ENCODE measurements at regions of chr13 and their contacts with region 1.

Region 1: GRCh38 chr13:32427852-32428580 is at the start of gene N4BP2L1:
- DNase-seq: peak; percentile 95
- H3K4me3 Mint-ChIP-seq: peak within 1 kb of the TSS; percentile 94
- H3K27ac Mint-ChIP-seq: peak within 1 kb of the TSS; percentile 97
- H3K4me1 Mint-ChIP-seq: peaks cover 31% of the 10 kb centered on the region
- H3K27me3 Mint-ChIP-seq: no peaks in the 10 kb centered on the region
- total RNA-seq, gene N4BP2L1: 22.6 TPM

Region 2: DNA sequence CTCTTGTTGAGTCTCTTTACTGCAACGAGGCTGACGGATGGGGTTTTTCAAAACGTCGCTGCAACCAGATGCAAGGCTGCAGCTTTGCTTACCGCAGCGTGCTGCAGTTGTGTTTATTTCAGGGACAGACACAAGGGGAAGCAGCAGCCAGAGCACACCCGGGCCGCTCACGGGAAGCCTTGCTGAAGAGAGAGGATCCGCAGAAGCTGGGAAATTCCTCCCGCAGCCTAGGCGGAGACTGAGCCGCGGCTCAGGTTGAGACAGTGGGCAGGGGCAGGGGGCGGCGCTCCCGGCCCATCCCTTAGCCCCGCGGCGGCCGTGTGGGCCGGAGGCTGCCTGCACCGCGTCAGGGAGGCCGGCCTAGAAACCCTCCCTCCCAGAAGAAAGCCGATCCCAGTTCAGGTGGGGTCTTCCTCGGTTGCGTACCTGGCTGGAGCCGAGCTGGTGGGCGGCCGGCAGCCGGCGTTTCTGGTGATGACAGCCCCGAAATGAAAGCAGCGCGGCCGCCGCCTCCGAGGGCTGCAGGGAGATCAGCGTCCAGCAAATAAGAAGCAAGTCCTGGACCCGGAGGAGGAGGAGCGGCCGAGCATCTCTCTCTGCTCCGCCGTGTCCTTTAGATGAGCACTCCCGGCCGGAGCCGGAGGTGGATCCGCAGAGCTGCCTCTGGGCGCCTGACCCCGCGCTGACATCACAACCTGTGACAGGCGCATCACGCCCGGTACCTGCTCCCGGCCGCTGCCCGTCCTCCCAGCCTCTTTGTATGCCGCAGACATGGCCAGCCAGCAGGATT is 396.8 kb before region 1 on chr13 and contains the start of gene FRY:
- CTCF ChIA-PET with region 1: no interaction called
- intact Hi-C with region 1: loop called (anchors 5 kb)
- DNase-seq: peak; percentile 72
- H3K4me3 Mint-ChIP-seq: peak within 1 kb of the TSS; percentile 85
- H3K27ac Mint-ChIP-seq: peak within 1 kb of the TSS; percentile 68
- H3K4me1 Mint-ChIP-seq: peaks cover 45% of the 10 kb centered on the region
- H3K27me3 Mint-ChIP-seq: peaks cover 9% of the 10 kb centered on the region
- total RNA-seq, gene FRY: 7.3 to 7.8 TPM

Region 3: GRCh38 chr13:32315238-32316027 is 112.6 kb before region 1 on chr13 and contains the starts of genes BRCA2 and ZAR1L:
- CTCF ChIA-PET with region 1: no interaction called
- intact Hi-C with region 1: loop called (anchors 1 kb)
- DNase-seq: peak; percentile 91
- H3K4me3 Mint-ChIP-seq: peak within 1 kb of the TSS; percentile 92
- H3K27ac Mint-ChIP-seq: peak within 1 kb of the TSS; percentile 98
- H3K4me1 Mint-ChIP-seq: peaks cover 12% of the 10 kb centered on the region
- H3K27me3 Mint-ChIP-seq: no peaks in the 10 kb centered on the region
- total RNA-seq, gene BRCA2: 17.3 to 21.3 TPM
- total RNA-seq, gene ZAR1L: not detected

Region 4: DNA sequence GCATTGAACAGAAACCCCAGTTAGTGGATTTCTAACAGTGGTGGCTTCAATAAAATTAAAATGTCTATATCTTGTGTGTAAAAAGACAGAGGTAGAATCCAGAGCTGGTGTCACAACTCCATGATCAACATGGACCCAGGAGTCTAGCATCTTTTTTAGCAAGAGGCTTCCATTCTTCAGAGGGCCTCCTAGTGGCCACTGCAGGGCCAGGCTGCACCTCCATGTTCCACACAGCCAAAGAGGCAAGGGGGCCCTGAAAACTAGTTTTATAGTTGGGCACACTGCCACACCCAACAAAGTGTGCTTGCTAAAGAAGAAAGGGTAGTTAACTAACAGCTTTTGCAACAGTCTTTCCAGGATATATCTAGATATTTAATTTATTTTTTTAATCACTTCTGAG is 13.0 kb before region 1 on chr13:
- CTCF ChIA-PET with region 1: no interaction called
- intact Hi-C with region 1: no loop called
- DNase-seq: peak; percentile 48
- H3K4me3 Mint-ChIP-seq: no peak overlapping the region
- H3K27ac Mint-ChIP-seq: no peak overlapping the region
- H3K4me1 Mint-ChIP-seq: peaks cover 10% of the 10 kb centered on the region
- H3K27me3 Mint-ChIP-seq: no peaks in the 10 kb centered on the region

Region 5: GRCh38 chr13:32650705-32651311 is 222.8 kb after region 1 on chr13:
- CTCF ChIA-PET with region 1: no interaction called
- intact Hi-C with region 1: loop called (anchors 5 kb)
- DNase-seq: peak; percentile 79
- H3K4me3 Mint-ChIP-seq: no peak overlapping the region
- H3K27ac Mint-ChIP-seq: peak overlapping the region; percentile 12
- H3K4me1 Mint-ChIP-seq: peaks cover 39% of the 10 kb centered on the region
- H3K27me3 Mint-ChIP-seq: no peaks in the 10 kb centered on the region

Region 6: GRCh38 chr13:33639626-33640080 is 1211.6 kb after region 1 on chr13:
- CTCF ChIA-PET with region 1: no interaction called
- intact Hi-C with region 1: loop called (anchors 10 kb)
- DNase-seq: peak; percentile 81
- H3K4me3 Mint-ChIP-seq: no peak overlapping the region
- H3K27ac Mint-ChIP-seq: peak overlapping the region; percentile 80
- H3K4me1 Mint-ChIP-seq: peaks cover 41% of the 10 kb centered on the region
- H3K27me3 Mint-ChIP-seq: no peaks in the 10 kb centered on the region